Heart left ventricle (tissue), 16 donors: ENCODE measurements at regions of chr9 and their contacts with region 1.

Region 1: GRCh38 chr9:29389421-29389820 is 1816.1 kb upstream of the C9orf72 start:
- DNase-seq: no peak
- ATAC-seq: no peak
- H3K4me3 ChIP-seq: no peak overlapping the region
- H3K27ac ChIP-seq: no peak overlapping the region
- H3K4me1 ChIP-seq: no peaks in the 10 kb centered on the region
- H3K27me3 ChIP-seq: no peaks in the 10 kb centered on the region
- CTCF ChIP-seq: no peak
- POLR2A ChIP-seq: no peak

Region 2: GRCh38 chr9:28938981-28939380 is 450.4 kb before region 1 on chr9:
- intact Hi-C with region 1: loop called in 1 of 10 experiments (anchors 5 kb)
- DNase-seq: no peak
- ATAC-seq: no peak
- H3K4me3 ChIP-seq: no peak overlapping the region
- H3K27ac ChIP-seq: no peak overlapping the region
- H3K4me1 ChIP-seq: no peaks in the 10 kb centered on the region
- H3K27me3 ChIP-seq: no peaks in the 10 kb centered on the region
- CTCF ChIP-seq: no peak
- POLR2A ChIP-seq: no peak